ENCODE measurements at regions of chr4 and their contacts with region 1.

Region 1: DNA sequence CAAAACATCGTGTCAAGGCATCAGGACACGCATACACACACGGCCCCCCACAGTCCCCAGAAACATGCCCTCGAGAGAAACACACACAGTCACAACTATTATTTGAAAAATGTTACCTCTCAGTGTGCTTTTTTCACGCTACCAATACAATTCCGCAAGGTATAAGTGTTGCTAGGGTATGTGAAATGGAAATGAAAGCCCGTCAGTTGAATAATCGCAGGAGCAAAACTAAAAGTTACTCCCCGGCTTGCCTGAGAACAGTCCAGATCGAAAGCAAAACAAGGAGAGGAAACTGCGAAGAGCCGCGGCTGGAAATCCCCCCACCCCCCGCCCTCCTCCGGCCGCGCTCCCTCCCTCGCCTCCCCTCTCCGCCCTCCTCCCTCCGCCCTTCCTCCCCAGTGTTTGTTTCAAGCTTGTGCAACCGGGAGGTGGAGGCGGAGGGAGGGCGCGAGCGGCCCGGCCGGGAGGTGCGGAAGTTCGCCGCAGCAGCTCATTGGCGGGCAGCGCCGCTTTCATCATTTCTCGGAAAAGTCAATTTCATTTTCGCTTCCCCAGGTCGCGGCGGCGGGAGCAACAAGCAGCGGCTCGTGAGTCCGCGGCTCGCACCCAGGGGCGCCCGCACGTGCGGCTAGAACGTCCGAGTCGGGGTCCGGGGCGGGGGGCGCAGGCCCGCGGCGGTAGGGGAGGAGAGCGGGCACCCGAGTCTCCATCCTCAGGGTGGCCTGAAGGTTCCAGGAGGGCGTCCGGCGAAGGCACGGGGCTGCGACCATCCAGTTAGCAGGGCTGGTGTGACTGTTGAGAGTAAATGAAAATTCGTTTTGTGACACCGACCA is at the start of gene IRF2:
- DNase-seq: peak; percentile 97 to 98
- H3K4me3 ChIP-seq: peak within 1 kb of the TSS; percentile 83 to 93
- H3K27ac ChIP-seq: peak within 1 kb of the TSS; percentile 98 to 99
- H3K4me1 ChIP-seq: peaks cover 10 to 17% of the 10 kb centered on the region in 2 donors
- H3K27me3 ChIP-seq: no peaks in the 10 kb centered on the region
- CTCF ChIP-seq: peak in 1 of 4 experiments; percentile 45
- POLR2A ChIP-seq: peak; percentile 83 to 96
- total RNA-seq, gene IRF2: 7.9 to 45.7 (median 35.7) TPM

Region 2: DNA sequence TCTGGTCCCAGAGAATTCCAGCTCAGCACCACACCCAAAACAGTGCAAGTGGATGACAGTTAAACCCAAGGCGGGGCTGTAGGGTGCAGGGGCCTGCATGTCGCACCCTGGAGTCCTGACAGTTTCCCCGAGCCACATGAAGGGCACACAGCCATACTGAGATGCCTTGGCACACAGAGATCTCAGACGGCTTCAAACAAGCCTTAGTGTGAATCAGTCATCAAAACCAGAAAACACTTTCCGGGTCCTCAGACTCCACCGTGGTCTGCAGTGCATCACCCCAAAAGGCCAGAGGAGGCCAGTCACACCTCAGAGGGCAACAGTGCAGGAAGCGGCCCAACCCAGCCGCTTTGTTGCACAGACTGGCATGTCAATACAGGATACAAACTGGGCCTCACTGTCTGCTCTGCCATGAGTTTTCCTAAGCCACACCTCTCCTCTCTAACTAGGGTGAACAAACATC is 192.2 kb before region 1 on chr4:
- intact Hi-C with region 1: loop called (anchors 10 kb)
- DNase-seq: no peak
- H3K4me3 ChIP-seq: no peak overlapping the region
- H3K27ac ChIP-seq: no peak overlapping the region
- H3K4me1 ChIP-seq: no peaks in the 10 kb centered on the region
- H3K27me3 ChIP-seq: no peaks in the 10 kb centered on the region
- CTCF ChIP-seq: no peak
- POLR2A ChIP-seq: no peak

Region 3: GRCh38 chr4:184538023-184538599 is 63.6 kb after region 1 on chr4:
- intact Hi-C with region 1: loop called (anchors 10 kb)
- DNase-seq: peak; percentile 91 to 92
- H3K4me3 ChIP-seq: peak overlapping the region; percentile 56 to 62
- H3K27ac ChIP-seq: peak overlapping the region; percentile 95 to 96
- H3K4me1 ChIP-seq: peaks cover 4% of the 10 kb centered on the region in 2 donors
- H3K27me3 ChIP-seq: no peaks in the 10 kb centered on the region
- CTCF ChIP-seq: peak; percentile 69 to 88 (median 80)
- POLR2A ChIP-seq: no peak

Measured in uterus (tissue), 4 donors.